Left lung (tissue), 14 donors: ENCODE measurements at regions of chr14 and their contacts with region 1.

Region 1: DNA sequence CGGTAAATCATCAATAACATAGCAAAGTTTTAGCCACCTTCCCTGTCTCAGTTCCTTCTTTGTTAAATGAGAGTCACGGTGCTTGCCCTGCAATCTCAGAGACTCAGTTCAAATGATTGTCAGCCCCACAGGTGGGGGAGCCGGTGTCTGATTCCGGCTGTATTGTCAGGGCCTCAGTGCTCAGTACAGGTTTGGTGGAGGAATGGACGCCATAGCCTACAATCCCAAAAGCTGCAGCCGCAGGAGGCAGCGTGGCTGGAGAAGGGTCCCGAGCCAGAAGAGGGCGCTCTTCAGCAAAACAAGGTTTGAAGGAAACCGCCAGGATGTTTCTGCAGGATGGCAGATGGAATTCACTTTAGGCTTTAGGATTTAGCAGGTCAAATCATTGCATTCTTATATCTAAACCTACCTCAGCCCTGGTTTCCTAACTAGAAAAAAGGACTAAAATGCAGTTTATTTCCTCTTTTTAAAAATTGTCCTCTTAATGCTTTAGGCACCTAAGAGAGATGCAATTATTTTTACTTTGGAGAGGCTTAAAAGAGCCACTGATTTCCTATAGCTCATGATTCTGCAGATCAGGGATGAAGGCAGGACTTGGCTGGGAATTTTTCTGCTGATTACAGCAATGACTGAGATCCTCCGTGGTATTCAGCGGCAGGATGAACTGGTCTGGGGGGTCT is 29.2 kb downstream of the FOS start:
- DNase-seq: peak; percentile 83 to 91 (median 88)
- ATAC-seq: peak; percentile 77
- H3K4me3 ChIP-seq: no peak overlapping the region
- H3K27ac ChIP-seq: no peak overlapping the region
- H3K4me1 ChIP-seq: peaks cover 5 to 40% of the 10 kb centered on the region in 2 donors
- H3K27me3 ChIP-seq: no peaks in the 10 kb centered on the region
- CTCF ChIP-seq: peak; percentile 68 to 95

Region 2: DNA sequence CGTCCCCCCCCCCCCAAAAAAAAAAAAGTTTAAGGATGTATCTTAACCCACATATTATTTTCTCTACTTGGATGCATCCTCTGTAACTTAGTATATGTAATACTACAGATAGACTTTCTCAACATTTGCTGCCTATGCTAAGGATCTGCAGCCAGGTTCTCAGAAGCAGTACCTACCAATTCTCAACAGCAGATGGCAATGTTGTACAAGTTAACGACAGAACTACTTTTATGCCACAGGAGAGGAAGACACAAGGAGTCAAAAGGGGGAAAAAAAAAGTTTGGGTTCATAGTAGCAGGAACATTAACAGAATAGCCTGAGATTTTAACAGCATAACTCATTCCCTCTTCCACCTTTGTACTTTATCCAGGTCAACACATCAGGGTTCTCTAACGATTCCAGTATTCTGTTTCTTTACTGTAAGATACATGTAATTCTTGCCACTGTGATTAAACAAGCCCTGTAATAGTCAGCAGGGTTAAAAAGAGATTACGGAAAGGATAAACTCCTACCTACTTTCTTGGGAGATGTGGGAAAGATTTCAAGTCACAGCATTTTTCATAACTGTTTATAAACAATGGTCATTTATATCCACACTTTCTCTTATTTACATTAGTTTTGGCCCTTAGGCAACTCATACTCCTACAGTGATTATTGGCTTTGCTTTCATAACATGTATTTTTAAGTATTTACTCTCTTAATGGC is 175.3 kb before region 1 on chr14:
- intact Hi-C with region 1: loop called in 1 of 2 experiments (anchors 5 kb)
- DNase-seq: peak in 2 of 4 donors; percentile 70 to 82
- ATAC-seq: peak; percentile 92
- H3K4me3 ChIP-seq: no peak overlapping the region
- H3K27ac ChIP-seq: peak overlapping the region; percentile 14 to 28
- H3K4me1 ChIP-seq: peaks cover 15 to 24% of the 10 kb centered on the region in 2 donors
- H3K27me3 ChIP-seq: no peaks in the 10 kb centered on the region
- CTCF ChIP-seq: peak; percentile 58 to 87

Region 3: DNA sequence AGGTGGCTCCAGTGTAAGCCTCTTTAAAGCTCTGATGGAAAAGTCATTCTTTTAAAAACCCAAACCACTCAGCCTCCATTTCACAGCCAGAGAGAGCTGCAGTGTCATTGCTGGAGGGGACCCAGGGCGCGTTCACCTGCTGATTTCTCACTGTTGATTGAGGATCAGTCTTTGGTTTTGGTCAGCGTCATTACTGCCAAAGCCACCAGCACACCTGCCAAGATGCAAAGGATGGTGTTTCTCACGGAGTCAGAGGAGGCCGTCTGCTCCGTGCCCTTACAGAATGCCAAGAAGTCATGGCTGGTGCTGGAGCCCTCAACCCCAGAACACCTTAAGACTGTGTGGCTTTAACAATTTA is 181.6 kb after region 1 on chr14:
- intact Hi-C with region 1: loop called in 1 of 2 experiments (anchors 2 kb)
- DNase-seq: no peak
- ATAC-seq: no peak
- H3K4me3 ChIP-seq: no peak overlapping the region
- H3K27ac ChIP-seq: no peak overlapping the region
- H3K4me1 ChIP-seq: peaks cover 0 to 8% of the 10 kb centered on the region in 2 donors
- H3K27me3 ChIP-seq: no peaks in the 10 kb centered on the region
- CTCF ChIP-seq: no peak

Region 4: DNA sequence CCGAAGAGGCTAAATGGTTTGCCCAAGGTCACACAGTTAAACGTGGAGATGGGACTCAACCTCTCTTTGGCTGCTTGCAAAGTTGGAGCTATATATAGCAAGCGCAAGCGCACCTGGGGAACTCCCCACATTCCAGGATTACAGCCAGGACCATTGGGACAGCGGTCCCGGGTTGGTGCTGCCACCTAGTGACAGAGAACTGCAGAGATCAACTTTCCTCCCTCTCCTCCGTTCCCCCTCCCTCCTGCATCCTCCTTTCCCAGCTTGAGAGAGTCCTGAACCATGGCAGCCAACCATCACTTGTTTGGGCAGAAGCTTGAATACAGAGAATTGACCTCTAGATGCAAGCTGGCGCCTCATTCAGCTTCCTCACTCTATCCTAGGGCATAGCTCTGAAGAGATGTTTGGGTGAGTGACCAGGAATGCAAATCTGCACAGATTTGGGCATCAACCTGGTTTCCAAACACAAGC is 253.2 kb after region 1 on chr14:
- intact Hi-C with region 1: loop called in 1 of 2 experiments (anchors 5 kb)
- DNase-seq: peak; percentile 49 to 88 (median 83)
- ATAC-seq: peak; percentile 97
- H3K4me3 ChIP-seq: no peak overlapping the region
- H3K27ac ChIP-seq: no peak overlapping the region
- H3K4me1 ChIP-seq: peaks cover 0 to 30% of the 10 kb centered on the region in 2 donors
- H3K27me3 ChIP-seq: no peaks in the 10 kb centered on the region
- CTCF ChIP-seq: peak; percentile 80 to 83